ENCODE measurements at regions of chr12 and their contacts with region 1.

Region 1: DNA sequence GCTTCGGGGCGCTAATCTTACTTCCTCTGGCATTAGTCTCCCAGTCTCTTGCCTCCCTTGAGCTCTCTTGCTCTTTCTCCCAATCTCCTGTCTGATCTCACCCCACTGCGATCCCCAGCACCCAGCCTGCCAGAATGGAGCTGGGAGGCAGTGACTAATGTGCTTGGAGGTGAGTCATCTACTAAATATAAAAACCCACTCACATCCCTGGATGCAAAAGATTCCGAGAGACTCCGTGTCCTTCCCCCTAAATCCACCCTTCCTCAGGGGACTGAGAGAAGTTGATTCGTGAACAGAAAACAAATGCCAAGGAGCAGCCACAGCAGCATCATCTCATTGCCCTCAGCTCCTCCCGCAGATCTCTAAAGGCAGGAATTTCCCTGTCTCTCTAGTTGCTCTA is 45.7 kb upstream of the KCNA5 start:
- DNase-seq: peak; percentile 96
- H3K4me3 ChIP-seq: peak overlapping the region; percentile 37; the same call in 1 of the 2 replicates
- H3K27ac ChIP-seq: peak overlapping the region; percentile 35
- H3K4me1 ChIP-seq: peaks cover 11% of the 10 kb centered on the region
- H3K27me3 ChIP-seq: peaks cover 16% of the 10 kb centered on the region; the same call in 1 of the 2 replicates

Region 2: DNA sequence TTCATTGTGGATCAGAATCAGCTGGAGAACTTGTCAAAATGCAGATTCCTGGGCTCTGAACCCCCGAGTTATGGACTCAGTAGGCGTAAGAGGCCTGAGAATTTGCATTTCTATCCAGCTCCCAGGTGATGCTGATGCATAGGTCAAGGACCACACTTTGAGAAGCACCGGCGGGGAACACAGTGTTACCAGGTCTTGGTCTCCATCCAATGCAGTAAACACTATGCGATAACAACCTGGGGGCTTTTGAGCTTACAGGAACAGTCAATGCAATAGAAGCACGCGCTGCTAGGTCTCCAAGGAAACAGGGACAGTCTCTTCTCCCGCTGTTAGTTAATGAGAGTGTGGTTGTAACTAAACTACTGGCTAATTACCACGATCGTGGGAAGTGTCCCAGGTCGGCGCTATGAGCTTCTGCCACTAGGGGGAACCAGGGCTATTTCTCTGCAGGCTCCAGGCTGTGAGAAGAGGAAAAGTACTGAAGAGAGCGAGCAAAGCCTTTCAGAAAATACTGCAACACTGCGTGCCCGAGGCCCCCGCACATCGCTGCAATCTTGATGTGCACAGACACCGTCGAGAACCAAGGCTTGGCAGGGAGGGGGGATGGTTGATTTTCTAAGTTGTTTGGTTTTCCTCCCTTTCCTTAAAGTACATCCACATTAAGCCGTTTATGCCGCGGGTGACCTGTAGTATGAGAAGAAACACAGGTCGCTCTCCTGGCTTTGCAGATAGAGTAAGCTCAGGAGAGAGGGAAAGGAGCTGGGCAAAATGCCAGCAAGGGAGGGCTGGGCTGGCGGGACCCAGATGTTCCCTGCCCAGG is 140.3 kb before region 1 on chr12:
- in situ Hi-C with region 1: loop called (anchors 5 kb)
- DNase-seq: peak; percentile 83
- H3K4me3 ChIP-seq: peak overlapping the region; percentile 40; the same call in 1 of the 2 replicates
- H3K27ac ChIP-seq: no peak overlapping the region
- H3K4me1 ChIP-seq: no peaks in the 10 kb centered on the region
- H3K27me3 ChIP-seq: peaks cover 21% of the 10 kb centered on the region

Measured in GM23248 (cell line).